ENCODE measurements at regions of chr12 and their contacts with region 1.

Region 1: GRCh38 chr12:104215638-104216297 is at the start of gene TXNRD1:
- DNase-seq: peak; percentile 81 to 88
- H3K4me3 ChIP-seq: peak within 1 kb of the TSS; percentile 56 to 60
- H3K27ac ChIP-seq: peak within 1 kb of the TSS; percentile 88
- H3K4me1 ChIP-seq: peaks cover 37% of the 10 kb centered on the region
- H3K27me3 ChIP-seq: no peaks in the 10 kb centered on the region
- CTCF ChIP-seq: peak; percentile 69 to 79 (median 77)
- POLR2A ChIP-seq: peak in 1 of 2 donors; percentile 14
- total RNA-seq, gene TXNRD1: 144 TPM

Region 2: GRCh38 chr12:104294845-104295688 is 79.3 kb after region 1 on chr12:
- intact Hi-C with region 1: loop called (anchors 5 kb)
- DNase-seq: no peak
- H3K4me3 ChIP-seq: no peak overlapping the region
- H3K27ac ChIP-seq: no peak overlapping the region
- H3K4me1 ChIP-seq: peaks cover 59% of the 10 kb centered on the region
- H3K27me3 ChIP-seq: no peaks in the 10 kb centered on the region
- CTCF ChIP-seq: no peak
- POLR2A ChIP-seq: no peak

Measured in vagina (tissue), 2 donors.